ENCODE measurements at regions of chr17 and their contacts with region 1.

Region 1: GRCh38 chr17:700504-701094 is 14.0 kb downstream of the VPS53 start:
- DNase-seq: no peak
- H3K4me3 ChIP-seq: no peak overlapping the region
- H3K27ac ChIP-seq: no peak overlapping the region
- H3K4me1 ChIP-seq: peaks cover 34% of the 10 kb centered on the region
- H3K27me3 ChIP-seq: no peaks in the 10 kb centered on the region
- CTCF ChIP-seq: peak; percentile 74

Region 2: GRCh38 chr17:143782-144281 is 556.8 kb before region 1 on chr17:
- intact Hi-C with region 1: loop called (anchors 5 kb)
- DNase-seq: peak; percentile 84
- H3K4me3 ChIP-seq: peak overlapping the region; percentile 17
- H3K27ac ChIP-seq: no peak overlapping the region
- H3K4me1 ChIP-seq: peaks cover 19% of the 10 kb centered on the region
- H3K27me3 ChIP-seq: no peaks in the 10 kb centered on the region
- CTCF ChIP-seq: peak; percentile 95

Region 3: DNA sequence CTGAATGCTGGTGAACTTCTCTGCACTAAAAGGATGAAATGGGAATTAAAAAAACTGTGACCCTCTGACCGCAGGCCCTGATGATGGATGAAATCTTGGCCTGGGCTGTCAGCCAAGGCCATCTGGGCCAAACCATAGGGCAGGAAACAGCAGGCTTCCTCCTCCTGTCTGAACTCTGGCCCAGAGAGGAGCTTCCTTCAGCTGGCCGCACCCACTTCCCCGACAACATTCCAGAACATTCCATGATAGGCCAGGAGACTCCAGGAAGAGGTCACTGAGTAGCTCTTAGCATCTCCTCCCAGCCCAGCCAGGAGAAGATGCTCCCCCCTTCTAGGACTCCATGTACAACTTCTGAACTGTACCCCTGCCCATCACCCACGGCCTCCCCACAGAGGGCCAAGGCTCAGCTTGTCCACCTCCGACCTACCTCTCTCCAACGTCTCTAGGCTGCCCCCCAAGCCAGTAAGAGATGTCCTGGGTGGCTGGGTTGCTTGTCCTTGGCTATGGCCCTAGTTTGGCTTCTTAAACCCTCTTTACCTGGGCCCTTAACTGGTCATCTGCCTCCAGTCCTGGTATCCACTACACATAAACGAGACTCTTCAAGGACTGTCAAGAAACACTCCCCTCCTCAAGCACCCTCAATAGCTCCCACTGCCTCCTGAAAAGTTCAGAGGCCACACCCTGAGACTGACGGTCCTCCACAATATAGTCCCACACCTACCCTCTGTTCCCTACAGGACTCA is 349.7 kb before region 1 on chr17:
- intact Hi-C with region 1: no loop called
- DNase-seq: peak; percentile 83
- H3K4me3 ChIP-seq: no peak overlapping the region
- H3K27ac ChIP-seq: peak overlapping the region; percentile 91
- H3K4me1 ChIP-seq: peaks cover 64% of the 10 kb centered on the region
- H3K27me3 ChIP-seq: no peaks in the 10 kb centered on the region
- CTCF ChIP-seq: no peak

Region 4: GRCh38 chr17:409848-410545 is 290.6 kb before region 1 on chr17:
- intact Hi-C with region 1: loop called (anchors 5 kb)
- DNase-seq: peak; percentile 99
- H3K4me3 ChIP-seq: peak overlapping the region; percentile 93
- H3K27ac ChIP-seq: peak overlapping the region; percentile 86
- H3K4me1 ChIP-seq: peaks cover 30% of the 10 kb centered on the region
- H3K27me3 ChIP-seq: no peaks in the 10 kb centered on the region
- CTCF ChIP-seq: no peak

Measured in left ventricle myocardium inferior (tissue), 1 donor.